Naive thymus-derived CD4-positive, alpha-beta T cell (primary cell): ENCODE measurements at regions of chr22 and their contacts with region 1.

Region 1: DNA sequence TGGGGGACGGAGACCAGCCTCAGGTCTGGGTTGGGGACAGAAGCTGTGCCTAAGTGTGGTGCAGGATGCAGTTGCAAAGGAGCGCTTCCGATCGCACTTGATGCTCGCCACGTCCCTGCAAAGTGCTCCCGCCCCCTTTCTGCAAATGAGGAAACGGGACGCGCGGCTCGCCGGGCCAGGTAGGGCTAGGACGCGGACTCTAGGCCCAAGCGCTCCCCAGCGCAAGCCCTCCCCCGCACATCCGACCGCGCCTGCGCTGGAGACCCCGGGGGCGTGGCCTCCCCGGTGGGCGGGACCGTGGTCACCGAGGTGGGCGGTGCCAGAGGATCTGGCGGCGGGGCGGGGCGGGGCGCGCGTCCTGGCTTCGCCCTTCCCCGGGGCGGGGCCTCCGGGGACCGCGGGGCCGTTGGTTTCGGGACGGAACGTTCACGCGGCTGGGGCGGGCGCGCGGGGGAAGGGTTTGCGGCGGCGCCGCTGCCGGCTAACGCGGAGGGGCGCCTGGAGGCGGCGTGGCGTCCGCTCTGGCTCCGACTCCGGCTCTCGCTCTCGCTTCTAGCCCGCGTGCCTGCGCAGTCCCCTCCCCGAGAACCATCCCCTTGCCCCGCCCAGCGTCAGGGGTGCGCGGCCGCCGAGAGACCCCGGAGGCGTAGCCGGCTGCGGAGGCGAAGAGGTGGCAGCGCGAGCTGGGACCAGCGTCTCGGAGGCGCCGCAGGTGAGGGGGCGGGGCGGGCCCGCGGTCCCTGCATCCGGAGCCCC is at the start of gene FAM118A:
- DNase-seq: peak; percentile 86 to 100 (median 95)
- ATAC-seq: peak; percentile 96
- H3K4me3 ChIP-seq: peak within 1 kb of the TSS; percentile 76
- H3K4me3 Mint-ChIP-seq: peak within 1 kb of the TSS; percentile 86 to 97 (median 89)
- H3K27ac ChIP-seq: peak within 1 kb of the TSS; percentile 96
- H3K27ac Mint-ChIP-seq: peak within 1 kb of the TSS; percentile 92 to 99 (median 96)
- H3K4me1 ChIP-seq: peaks cover 14 to 21% of the 10 kb centered on the region in 2 donors
- H3K4me1 Mint-ChIP-seq: peaks cover 35 to 54% (median 49%) of the 10 kb centered on the region in 7 donors
- H3K27me3 ChIP-seq: no peaks in the 10 kb centered on the region
- H3K27me3 Mint-ChIP-seq: no peaks in the 10 kb centered on the region
- total RNA-seq, gene FAM118A: 61.3 to 216 (median 111) TPM

Region 2: GRCh38 chr22:45072322-45072903 is 237.2 kb before region 1 on chr22:
- CTCF ChIA-PET with region 1: no interaction called
- POLR2A ChIA-PET with region 1: no interaction called
- intact Hi-C with region 1: no loop called
- DNase-seq: no peak
- ATAC-seq: no peak
- H3K4me3 ChIP-seq: no peak overlapping the region
- H3K4me3 Mint-ChIP-seq: no peak overlapping the region
- H3K27ac ChIP-seq: no peak overlapping the region
- H3K27ac Mint-ChIP-seq: peak overlapping the region in 1 of 9 donors; percentile 51
- H3K4me1 ChIP-seq: no peaks in the 10 kb centered on the region
- H3K4me1 Mint-ChIP-seq: no peaks in the 10 kb centered on the region
- H3K27me3 ChIP-seq: no peaks in the 10 kb centered on the region
- H3K27me3 Mint-ChIP-seq: peaks cover 29 to 45% (median 37%) of the 10 kb centered on the region in 5 donors

Region 3: GRCh38 chr22:45163451-45164269 is 146.0 kb before region 1 on chr22 and contains the start of gene NUP50:
- CTCF ChIA-PET with region 1: no interaction called
- POLR2A ChIA-PET with region 1: no interaction called
- intact Hi-C with region 1: loop called in 1 of 2 experiments (anchors 1 kb)
- DNase-seq: peak; percentile 93 to 98 (median 97)
- ATAC-seq: peak; percentile 89
- H3K4me3 ChIP-seq: peak within 1 kb of the TSS; percentile 81
- H3K4me3 Mint-ChIP-seq: peak within 1 kb of the TSS; percentile 85 to 100 (median 96)
- H3K27ac ChIP-seq: peak within 1 kb of the TSS; percentile 77
- H3K27ac Mint-ChIP-seq: peak within 1 kb of the TSS; percentile 88 to 97 (median 96)
- H3K4me1 ChIP-seq: peaks cover 26 to 30% of the 10 kb centered on the region in 2 donors
- H3K4me1 Mint-ChIP-seq: peaks cover 37 to 72% (median 63%) of the 10 kb centered on the region in 7 donors
- H3K27me3 ChIP-seq: no peaks in the 10 kb centered on the region
- H3K27me3 Mint-ChIP-seq: no peaks in the 10 kb centered on the region
- total RNA-seq, gene NUP50: 107 to 151 (median 130) TPM

Region 4: DNA sequence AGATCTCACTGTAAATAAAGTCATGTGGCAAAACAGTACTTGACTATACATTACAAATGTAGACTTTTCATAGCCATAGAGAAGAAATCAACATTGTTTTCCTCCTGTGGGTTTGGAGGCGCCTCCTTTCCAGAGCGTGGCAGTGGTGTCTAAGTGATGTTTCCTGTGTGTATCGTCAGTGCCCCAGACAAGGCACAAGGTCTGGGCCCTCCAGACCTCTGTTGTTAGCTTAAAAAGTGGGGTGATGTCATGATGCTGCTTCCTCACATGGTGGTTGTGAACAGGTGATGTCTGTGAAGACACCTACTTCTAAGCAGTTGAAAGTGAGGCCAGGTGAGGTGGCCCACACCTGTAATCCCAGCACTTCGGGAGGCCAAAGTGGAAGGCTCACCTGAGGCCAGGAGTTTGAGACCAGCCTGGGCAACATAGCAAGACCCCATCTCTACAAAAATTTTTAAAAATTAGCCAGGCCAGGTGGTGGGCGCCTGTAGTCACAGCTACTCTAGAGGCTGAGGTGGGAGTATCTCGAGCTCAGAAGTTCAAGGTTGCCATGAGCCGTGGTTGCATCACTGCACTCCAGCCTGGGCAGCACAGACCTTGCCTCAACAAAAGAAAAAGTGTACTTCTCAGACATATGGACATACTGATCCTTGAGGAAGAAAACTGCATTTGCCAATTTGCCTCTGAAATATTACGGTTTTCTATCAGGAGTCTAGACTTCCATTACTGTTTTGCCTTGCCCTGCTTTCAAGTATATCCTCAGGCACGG is 130.2 kb before region 1 on chr22:
- CTCF ChIA-PET with region 1: no interaction called
- POLR2A ChIA-PET with region 1: no interaction called
- intact Hi-C with region 1: no loop called
- DNase-seq: peak in 7 of 9 donors; percentile 34 to 83 (median 70)
- ATAC-seq: peak; percentile 96
- H3K4me3 ChIP-seq: no peak overlapping the region
- H3K4me3 Mint-ChIP-seq: peak overlapping the region; percentile 19 to 71 (median 55)
- H3K27ac ChIP-seq: peak overlapping the region; percentile 58
- H3K27ac Mint-ChIP-seq: peak overlapping the region; percentile 71 to 97 (median 93)
- H3K4me1 ChIP-seq: peaks cover 6 to 42% of the 10 kb centered on the region in 2 donors
- H3K4me1 Mint-ChIP-seq: peaks cover 31 to 73% (median 66%) of the 10 kb centered on the region in 7 donors
- H3K27me3 ChIP-seq: no peaks in the 10 kb centered on the region
- H3K27me3 Mint-ChIP-seq: no peaks in the 10 kb centered on the region

Region 5: DNA sequence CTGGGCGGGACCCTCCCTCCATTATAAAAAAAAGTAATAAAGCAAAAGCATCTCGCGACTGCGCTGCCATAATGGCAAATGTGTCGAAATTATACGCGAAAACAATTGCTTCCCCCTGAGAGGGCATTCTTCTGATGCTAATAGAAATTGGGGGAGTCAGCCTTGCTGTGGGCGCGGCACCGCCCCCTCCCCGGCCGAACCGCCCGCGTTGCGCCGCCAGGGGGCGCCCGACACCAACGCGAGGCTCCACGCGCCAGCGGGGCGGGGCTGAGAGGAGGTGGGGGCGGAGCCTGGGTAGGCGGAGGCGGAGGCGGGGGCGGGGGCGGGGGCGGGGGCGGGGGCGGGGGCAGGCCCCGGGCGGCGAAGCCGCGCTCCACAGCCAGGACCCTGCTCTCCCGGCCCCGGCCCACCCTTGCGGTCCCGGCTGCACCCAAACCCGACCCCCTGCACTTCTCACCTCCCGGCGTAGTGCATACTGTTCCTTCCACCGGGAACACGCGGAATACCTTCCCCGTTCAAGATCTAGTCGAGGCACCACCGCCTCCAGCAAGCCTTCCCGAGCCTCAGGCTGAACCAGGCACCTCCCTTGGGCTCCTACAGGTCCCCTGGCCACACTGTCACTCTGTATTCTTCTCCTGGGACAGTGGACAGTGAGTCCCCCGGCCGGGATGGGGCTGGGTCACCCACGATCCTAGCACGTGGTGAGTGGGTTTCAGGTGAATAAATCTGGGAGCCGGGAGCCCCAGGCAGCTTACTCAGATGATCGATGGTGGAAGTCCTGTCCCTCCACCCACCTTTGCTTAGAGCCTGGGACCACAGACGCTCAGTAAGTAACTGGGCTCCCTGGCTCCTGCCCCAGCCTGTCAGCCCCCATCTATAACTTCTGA is 40.4 kb before region 1 on chr22:
- CTCF ChIA-PET with region 1: no interaction called
- POLR2A ChIA-PET with region 1: interaction called, 3 read pairs
- intact Hi-C with region 1: loop called (anchors 1 kb)
- DNase-seq: peak; percentile 82 to 99 (median 90)
- ATAC-seq: peak; percentile 100
- H3K4me3 ChIP-seq: peak overlapping the region; percentile 85
- H3K4me3 Mint-ChIP-seq: peak overlapping the region; percentile 71 to 86 (median 84)
- H3K27ac ChIP-seq: peak overlapping the region; percentile 28
- H3K27ac Mint-ChIP-seq: peak overlapping the region; percentile 43 to 85 (median 72)
- H3K4me1 ChIP-seq: peaks cover 4% of the 10 kb centered on the region in 2 donors
- H3K4me1 Mint-ChIP-seq: peaks cover 4 to 11% (median 8%) of the 10 kb centered on the region in 7 donors
- H3K27me3 ChIP-seq: no peaks in the 10 kb centered on the region
- H3K27me3 Mint-ChIP-seq: peaks cover 0 to 55% (median 0%) of the 10 kb centered on the region in 5 donors

Region 6: DNA sequence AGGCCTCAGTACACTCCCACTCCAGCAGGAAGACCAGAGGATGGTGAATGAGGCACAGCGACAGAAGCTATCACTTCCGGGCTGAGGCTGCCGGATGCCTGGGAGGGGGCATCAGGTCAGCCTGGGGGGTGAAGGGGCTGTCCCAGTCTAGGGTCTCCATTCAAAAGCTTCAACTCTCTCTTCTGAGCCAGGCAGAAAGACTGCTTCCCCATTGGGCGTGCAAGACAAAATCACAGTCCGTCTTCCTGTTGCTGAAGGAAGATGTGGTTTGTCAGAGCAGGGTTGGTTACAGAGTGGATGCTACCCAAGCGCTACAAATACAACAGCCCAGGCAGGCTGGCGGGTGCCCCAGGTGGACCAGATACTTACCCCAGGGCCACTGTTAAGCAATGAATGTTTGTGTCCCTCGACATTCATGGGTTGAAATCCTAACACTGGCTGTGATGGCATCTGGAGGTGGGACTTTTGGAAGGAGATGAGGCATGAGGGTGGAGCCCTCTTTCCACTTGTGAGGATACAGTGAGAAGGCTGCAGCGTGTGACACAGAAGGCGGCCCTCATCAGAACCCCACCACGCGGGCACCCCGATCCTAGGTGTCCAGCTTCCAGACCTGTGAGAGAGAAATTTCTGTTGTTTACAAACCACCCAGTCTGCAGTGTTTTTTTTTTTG is 12.9 kb before region 1 on chr22:
- CTCF ChIA-PET with region 1: interaction called, 5 read pairs
- POLR2A ChIA-PET with region 1: interaction called, 73 read pairs
- intact Hi-C with region 1: loop called in 1 of 2 experiments (anchors 1 kb)
- DNase-seq: peak in 7 of 9 donors; percentile 49 to 77 (median 71)
- ATAC-seq: peak; percentile 92
- H3K4me3 ChIP-seq: peak overlapping the region; percentile 3
- H3K4me3 Mint-ChIP-seq: peak overlapping the region; percentile 47 to 82 (median 66)
- H3K27ac ChIP-seq: peak overlapping the region; percentile 72
- H3K27ac Mint-ChIP-seq: peak overlapping the region; percentile 80 to 97 (median 92)
- H3K4me1 ChIP-seq: peaks cover 9 to 20% of the 10 kb centered on the region in 2 donors
- H3K4me1 Mint-ChIP-seq: peaks cover 12 to 43% (median 25%) of the 10 kb centered on the region in 7 donors
- H3K27me3 ChIP-seq: no peaks in the 10 kb centered on the region
- H3K27me3 Mint-ChIP-seq: no peaks in the 10 kb centered on the region

Region 7: GRCh38 chr22:45344334-45344733 is 34.7 kb after region 1 on chr22:
- CTCF ChIA-PET with region 1: no interaction called
- POLR2A ChIA-PET with region 1: interaction called, 5 read pairs
- intact Hi-C with region 1: loop called in 1 of 2 experiments (anchors 1 kb)
- DNase-seq: no peak
- ATAC-seq: no peak
- H3K4me3 ChIP-seq: no peak overlapping the region
- H3K4me3 Mint-ChIP-seq: no peak overlapping the region
- H3K27ac ChIP-seq: no peak overlapping the region
- H3K27ac Mint-ChIP-seq: peak overlapping the region in 8 of 9 donors; percentile 36 to 90 (median 76)
- H3K4me1 ChIP-seq: peaks cover 0 to 24% of the 10 kb centered on the region in 2 donors
- H3K4me1 Mint-ChIP-seq: peaks cover 5 to 42% (median 26%) of the 10 kb centered on the region in 7 donors
- H3K27me3 ChIP-seq: no peaks in the 10 kb centered on the region
- H3K27me3 Mint-ChIP-seq: no peaks in the 10 kb centered on the region

Region 8: GRCh38 chr22:45413368-45414211 is 103.9 kb after region 1 on chr22 and contains the starts of genes RIBC2 and SMC1B:
- CTCF ChIA-PET with region 1: interaction called, 3 read pairs
- POLR2A ChIA-PET with region 1: interaction called, 3 read pairs
- intact Hi-C with region 1: loop called in 1 of 2 experiments (anchors 1 kb)
- DNase-seq: peak; percentile 58 to 89 (median 84)
- ATAC-seq: peak; percentile 97
- H3K4me3 ChIP-seq: peak within 1 kb of the TSS; percentile 77
- H3K4me3 Mint-ChIP-seq: peak within 1 kb of the TSS; percentile 68 to 90 (median 80)
- H3K27ac ChIP-seq: peak within 1 kb of the TSS; percentile 54
- H3K27ac Mint-ChIP-seq: peak within 1 kb of the TSS; percentile 36 to 96 (median 74)
- H3K4me1 ChIP-seq: peaks cover 8 to 12% of the 10 kb centered on the region in 2 donors
- H3K4me1 Mint-ChIP-seq: peaks cover 0 to 21% (median 14%) of the 10 kb centered on the region in 7 donors
- H3K27me3 ChIP-seq: no peaks in the 10 kb centered on the region
- H3K27me3 Mint-ChIP-seq: peaks cover 0 to 4% (median 0%) of the 10 kb centered on the region in 5 donors
- total RNA-seq, gene RIBC2: 0.59 to 9.5 (median 1.4) TPM in 3 of 5 experiments, not detected in the others
- total RNA-seq, gene SMC1B: 0.11 to 0.70 TPM in 2 of 5 experiments, not detected in the others

Region 9: GRCh38 chr22:45435544-45436139 is 126.0 kb after region 1 on chr22:
- CTCF ChIA-PET with region 1: interaction called, 3 read pairs
- POLR2A ChIA-PET with region 1: no interaction called
- intact Hi-C with region 1: loop called in 1 of 2 experiments (anchors 1 kb)
- DNase-seq: peak; percentile 60 to 79 (median 73)
- ATAC-seq: peak; percentile 93
- H3K4me3 ChIP-seq: no peak overlapping the region
- H3K4me3 Mint-ChIP-seq: peak overlapping the region in 5 of 10 donors; percentile 12 to 65 (median 32)
- H3K27ac ChIP-seq: no peak overlapping the region
- H3K27ac Mint-ChIP-seq: peak overlapping the region in 6 of 9 donors; percentile 31 to 71 (median 60)
- H3K4me1 ChIP-seq: peaks cover 2 to 6% of the 10 kb centered on the region in 2 donors
- H3K4me1 Mint-ChIP-seq: peaks cover 9 to 22% (median 13%) of the 10 kb centered on the region in 7 donors
- H3K27me3 ChIP-seq: no peaks in the 10 kb centered on the region
- H3K27me3 Mint-ChIP-seq: peaks cover 0 to 7% (median 0%) of the 10 kb centered on the region in 5 donors